ENCODE measurements at regions of chr20 and their contacts with region 1.

Region 1: DNA sequence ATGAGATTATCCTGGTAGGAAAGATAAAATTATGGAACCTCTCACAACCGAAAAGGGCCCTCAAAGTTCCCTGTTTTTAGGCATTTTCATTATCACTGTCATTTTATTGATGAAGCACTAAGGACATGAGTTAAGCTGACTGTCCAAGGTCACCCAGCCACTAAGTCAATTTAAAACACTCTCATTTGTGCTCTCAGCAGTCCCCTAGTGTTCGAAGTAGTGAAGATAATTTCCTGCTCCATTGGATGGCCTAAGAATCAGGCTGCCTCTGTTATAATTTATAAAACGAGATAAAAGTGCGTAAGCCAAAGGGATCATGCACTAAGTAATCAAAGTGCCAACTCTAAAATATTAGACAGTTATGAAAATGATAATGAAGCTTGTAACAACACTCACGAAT is 169.1 kb downstream of the KIF16B start:
- DNase-seq: no peak
- ATAC-seq: no peak
- H3K4me3 Mint-ChIP-seq: no peak overlapping the region
- H3K27ac Mint-ChIP-seq: no peak overlapping the region
- H3K4me1 Mint-ChIP-seq: peaks cover 9% of the 10 kb centered on the region
- H3K27me3 Mint-ChIP-seq: no peaks in the 10 kb centered on the region
- CTCF ChIP-seq: no peak

Region 2: DNA sequence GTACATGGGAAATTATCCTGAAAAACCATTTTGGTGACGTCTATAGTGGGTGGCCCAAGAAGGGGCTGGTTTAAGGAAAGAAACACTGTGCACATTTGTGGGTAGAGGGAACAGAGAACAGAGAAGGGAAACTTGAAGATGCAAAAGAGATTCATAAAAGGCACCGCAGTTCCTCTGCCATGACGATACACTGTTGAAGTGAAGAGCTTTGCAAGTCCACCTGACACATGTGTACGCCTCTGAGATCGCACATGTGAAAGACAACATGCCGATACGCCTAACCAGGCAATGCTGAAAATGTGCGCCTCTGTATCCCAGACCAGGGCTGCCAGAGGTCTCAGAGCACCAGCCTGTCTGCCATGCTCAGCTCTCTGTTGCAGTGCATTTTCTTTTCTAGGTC is 11.8 kb before region 1 on chr20:
- CTCF ChIA-PET with region 1: interaction called, 3 read pairs
- POLR2A ChIA-PET with region 1: no interaction called
- intact Hi-C with region 1: loop called (anchors 2 kb)
- DNase-seq: peak; percentile 26
- ATAC-seq: peak; percentile 85
- H3K4me3 Mint-ChIP-seq: peak overlapping the region; percentile 72
- H3K27ac Mint-ChIP-seq: peak overlapping the region; percentile 46
- H3K4me1 Mint-ChIP-seq: peaks cover 40% of the 10 kb centered on the region
- H3K27me3 Mint-ChIP-seq: no peaks in the 10 kb centered on the region
- CTCF ChIP-seq: no peak

Measured in activated B cell treated with CpG ODN at 0.5 μM for 24 hours (primary cell).